BJ (cell line): ENCODE measurements at regions of chr1 and their contacts with region 1.

Region 1: DNA sequence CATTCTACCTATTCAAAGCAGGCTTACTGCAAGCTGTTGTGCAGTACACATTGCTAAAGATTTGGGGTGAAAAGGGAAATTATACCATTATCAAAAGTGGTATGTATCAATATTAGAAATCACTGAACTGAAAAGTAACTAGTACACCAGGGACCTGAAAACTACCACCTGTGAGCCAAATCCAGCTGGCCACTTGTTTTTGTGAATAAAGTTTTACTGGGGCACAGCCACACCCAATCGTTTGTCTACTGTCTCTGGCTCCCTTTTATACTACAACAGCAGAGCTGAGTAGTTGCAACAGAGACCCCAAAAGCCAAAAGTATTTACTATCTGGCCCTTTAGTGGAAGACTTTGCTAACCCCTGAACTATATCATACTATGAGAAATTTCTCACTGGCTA is 13.8 kb upstream of the CR1L start:
- DNase-seq: no peak
- H3K4me3 ChIP-seq: no peak overlapping the region
- H3K27me3 ChIP-seq: no peaks in the 10 kb centered on the region
- CTCF ChIP-seq: no peak

Region 2: DNA sequence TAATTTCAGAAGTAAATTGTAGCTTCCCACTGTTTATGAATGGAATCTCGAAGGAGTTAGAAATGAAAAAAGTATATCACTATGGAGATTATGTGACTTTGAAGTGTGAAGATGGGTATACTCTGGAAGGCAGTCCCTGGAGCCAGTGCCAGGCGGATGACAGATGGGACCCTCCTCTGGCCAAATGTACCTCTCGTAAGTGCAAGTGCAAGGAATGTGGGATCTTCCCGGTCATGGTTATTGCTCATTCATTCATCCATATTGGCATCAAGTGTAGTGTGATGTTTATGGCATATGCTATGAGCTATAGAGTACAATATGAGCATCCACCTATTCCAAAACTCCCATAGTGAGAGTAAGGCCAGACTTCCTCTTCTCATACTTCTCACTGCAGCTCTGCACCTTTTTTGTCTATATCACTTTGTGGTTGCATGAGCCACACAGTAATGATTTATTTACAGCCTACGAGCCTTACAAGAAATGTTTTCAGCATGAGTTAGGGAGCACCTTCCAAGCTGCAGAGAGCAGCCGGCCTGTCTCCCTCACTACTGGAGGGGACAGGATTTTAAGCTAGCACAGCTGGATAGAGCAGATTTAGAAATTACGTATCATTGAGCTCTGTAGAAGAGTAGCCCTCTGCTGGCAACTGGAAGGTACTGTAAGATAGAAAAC is 11.1 kb before region 1 on chr1:
- CTCF ChIA-PET with region 1: interaction called, 14 read pairs
- POLR2A ChIA-PET with region 1: no interaction called
- DNase-seq: no peak
- H3K4me3 ChIP-seq: no peak overlapping the region
- H3K27me3 ChIP-seq: no peaks in the 10 kb centered on the region
- CTCF ChIP-seq: peak; percentile 86

Region 3: DNA sequence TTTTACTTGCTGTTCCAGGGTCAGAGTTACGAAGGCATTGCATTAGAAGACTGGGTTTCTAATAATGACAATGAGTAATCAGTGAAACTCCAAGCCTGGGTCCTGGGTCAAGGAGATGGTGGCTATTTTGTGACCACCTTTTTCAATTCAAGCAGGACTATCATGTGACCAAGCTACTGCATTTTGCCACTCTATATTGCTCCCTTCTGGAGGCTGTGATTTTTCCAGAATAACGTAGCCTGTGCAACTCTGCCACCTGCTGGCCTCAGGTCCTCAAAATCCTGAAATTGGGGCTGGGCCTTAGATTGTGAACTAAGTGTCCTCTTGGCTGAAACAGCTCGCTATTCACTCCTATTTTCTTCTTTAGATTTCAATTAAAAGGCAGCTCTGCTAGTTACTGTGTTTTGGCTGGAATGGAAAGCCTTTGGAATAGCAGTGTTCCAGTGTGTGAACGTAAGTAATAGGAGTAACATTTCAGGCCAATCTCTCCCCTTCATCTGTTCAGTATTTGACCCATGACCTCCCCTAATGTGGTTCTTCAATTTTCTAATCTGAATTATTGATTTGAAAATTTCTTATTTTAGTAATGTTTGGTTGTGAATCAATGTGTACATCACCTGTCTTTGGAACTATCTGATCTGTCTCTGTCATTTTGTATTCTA is 67.8 kb after region 1 on chr1:
- CTCF ChIA-PET with region 1: no interaction called
- POLR2A ChIA-PET with region 1: no interaction called
- DNase-seq: no peak
- H3K4me3 ChIP-seq: no peak overlapping the region
- H3K27me3 ChIP-seq: no peaks in the 10 kb centered on the region
- CTCF ChIP-seq: peak; percentile 75